ENCODE measurements at regions of chr11 and their contacts with region 1.

Region 1: GRCh38 chr11:26753723-26754504 is 32.1 kb upstream of the SLC5A12 start:
- DNase-seq: peak; percentile 53
- ATAC-seq: peak; percentile 74
- H3K4me3 ChIP-seq: no peak overlapping the region
- H3K27ac ChIP-seq: no peak overlapping the region
- H3K4me1 ChIP-seq: no peaks in the 10 kb centered on the region
- H3K27me3 ChIP-seq: no peaks in the 10 kb centered on the region
- CTCF ChIP-seq: peak; percentile 73

Region 2: DNA sequence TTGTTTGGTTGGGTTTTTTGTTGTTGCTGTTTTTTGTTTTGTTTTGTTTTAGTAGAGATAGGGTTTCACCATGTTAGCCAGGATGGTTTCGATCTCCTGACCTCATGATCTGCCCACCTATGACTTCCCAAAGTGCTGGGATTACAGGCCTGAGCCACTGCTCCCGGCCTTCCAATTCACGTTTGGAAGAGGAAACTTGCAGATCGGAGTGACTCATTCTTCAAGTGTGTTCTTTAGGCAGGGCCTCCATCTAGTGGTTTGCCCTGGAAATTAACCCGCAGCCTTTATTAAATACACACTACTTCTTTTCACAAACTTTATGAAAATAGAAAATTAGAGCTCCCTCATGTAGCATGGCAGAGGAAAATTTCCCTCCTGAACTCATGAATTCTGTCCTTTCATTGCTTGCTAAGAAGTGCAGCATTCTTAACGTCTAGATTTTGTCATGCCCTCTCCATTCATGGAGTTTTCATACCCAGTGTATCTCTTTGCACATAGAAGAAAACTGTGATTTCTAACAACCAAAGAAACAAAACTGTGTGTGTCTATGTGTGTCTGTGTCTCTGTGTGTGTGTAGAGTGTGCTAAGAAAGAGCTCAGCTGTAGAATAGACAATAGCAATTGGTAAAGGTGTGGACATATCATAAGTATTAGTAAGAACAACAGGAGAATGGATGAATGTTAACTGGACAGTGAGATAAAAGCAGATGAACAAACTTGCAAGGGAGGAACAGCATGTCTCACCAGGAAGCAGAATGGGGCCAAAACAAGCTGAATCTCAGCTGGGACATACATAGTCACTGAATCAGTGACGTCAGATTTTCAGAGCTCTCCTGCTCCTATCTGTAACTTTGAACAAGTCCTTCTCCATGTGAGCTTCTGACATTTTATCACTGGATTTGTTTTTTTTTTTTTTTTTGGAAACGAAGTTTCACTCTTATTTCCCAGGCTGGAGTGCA is 405.1 kb after region 1 on chr11:
- CTCF ChIA-PET with region 1: no interaction called
- POLR2A ChIA-PET with region 1: no interaction called
- intact Hi-C with region 1: loop called (anchors 1 kb)
- DNase-seq: peak; percentile 76
- ATAC-seq: peak; percentile 83
- H3K4me3 ChIP-seq: no peak overlapping the region
- H3K27ac ChIP-seq: no peak overlapping the region
- H3K4me1 ChIP-seq: no peaks in the 10 kb centered on the region
- H3K27me3 ChIP-seq: no peaks in the 10 kb centered on the region
- CTCF ChIP-seq: peak; percentile 77